Activated CD8-positive, alpha-beta T cell treated with anti-CD3 and anti-CD28 coated beads, Interleukin-2, amount 10 ng/mL, durations not matched to agents 7 days and 5 days (primary cell): ENCODE measurements at regions of chr19 and their contacts with region 1.

Region 1: DNA sequence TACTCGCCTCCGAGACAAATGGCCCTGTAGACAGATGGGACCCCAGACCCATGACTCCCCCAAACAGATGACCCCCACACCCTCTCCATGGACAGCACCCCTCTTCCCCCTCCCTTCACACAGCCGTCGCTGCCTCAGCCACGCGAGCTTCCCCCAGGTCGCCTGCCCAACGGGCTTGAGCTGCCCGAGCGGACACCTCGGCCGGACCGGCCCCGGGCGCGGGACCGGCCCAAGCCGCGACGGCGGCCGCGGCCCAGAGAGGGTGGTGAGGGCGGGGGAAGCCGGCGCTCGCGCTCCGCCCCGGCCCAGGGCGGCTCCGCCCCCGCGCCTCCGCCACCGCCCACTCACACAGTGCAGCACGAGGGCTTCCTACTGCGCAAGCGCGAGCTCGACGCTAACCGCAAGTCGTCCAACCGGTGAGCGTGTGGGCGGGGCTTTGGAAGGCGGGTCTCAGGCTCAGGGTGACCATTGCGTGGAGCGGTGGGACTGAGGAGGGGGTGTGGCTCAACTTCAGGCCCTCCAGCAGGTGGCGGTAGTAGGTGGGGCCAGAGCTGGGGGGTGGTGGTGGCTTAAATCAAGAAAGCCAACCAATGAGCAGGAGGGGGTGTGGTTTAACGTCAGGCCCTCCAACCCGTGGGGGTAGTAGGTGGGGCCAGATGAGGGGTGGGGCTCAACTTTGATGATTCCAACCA is 6.2 kb upstream of the SHKBP1 start:
- DNase-seq: peak; percentile 99
- ATAC-seq: peak; percentile 96
- H3K4me3 Mint-ChIP-seq: peak overlapping the region; percentile 62
- H3K27ac Mint-ChIP-seq: peak overlapping the region; percentile 73
- H3K4me1 Mint-ChIP-seq: peaks cover 19% of the 10 kb centered on the region
- H3K27me3 Mint-ChIP-seq: peaks cover 32% of the 10 kb centered on the region

Region 2: GRCh38 chr19:40489882-40490230 is 80.6 kb before region 1 on chr19:
- CTCF ChIA-PET with region 1: no interaction called
- POLR2A ChIA-PET with region 1: no interaction called
- DNase-seq: no peak
- ATAC-seq: no peak
- H3K4me3 Mint-ChIP-seq: no peak overlapping the region
- H3K27ac Mint-ChIP-seq: no peak overlapping the region
- H3K4me1 Mint-ChIP-seq: peaks cover 6% of the 10 kb centered on the region
- H3K27me3 Mint-ChIP-seq: peaks cover 23% of the 10 kb centered on the region

Region 3: DNA sequence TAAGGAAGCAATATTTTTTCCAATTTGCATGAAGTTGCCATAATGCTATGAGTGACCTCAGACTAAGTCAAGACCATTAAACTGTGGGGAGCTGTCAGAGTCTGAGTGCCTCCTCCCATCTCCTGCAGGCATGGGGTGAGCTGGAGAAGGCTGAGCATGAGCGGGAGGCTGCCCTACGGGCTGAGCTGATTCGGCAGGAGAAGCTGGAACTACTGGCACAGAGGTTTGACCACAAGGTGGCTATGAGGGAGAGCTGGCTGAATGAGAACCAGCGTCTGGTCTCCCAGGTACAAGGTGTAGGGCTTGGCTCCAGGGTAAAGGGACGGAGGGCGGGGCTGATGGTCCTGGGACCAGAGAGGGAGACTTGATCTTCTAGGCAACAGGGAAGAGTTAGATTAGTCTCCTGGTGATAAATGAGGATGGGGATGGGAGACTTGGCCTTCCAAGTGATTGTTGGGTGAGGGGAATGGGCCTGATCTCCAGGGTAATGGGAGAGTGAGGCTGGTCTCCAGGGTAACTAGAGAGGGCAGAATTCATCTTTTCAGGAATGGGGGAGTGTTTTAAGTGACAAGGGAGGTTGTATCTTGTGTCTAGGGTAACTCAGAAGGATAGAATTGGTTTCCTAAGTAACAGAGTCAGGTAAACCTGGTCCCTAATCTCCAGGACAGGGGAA is 67.7 kb before region 1 on chr19:
- CTCF ChIA-PET with region 1: no interaction called
- POLR2A ChIA-PET with region 1: no interaction called
- DNase-seq: no peak
- ATAC-seq: no peak
- H3K4me3 Mint-ChIP-seq: no peak overlapping the region
- H3K27ac Mint-ChIP-seq: no peak overlapping the region
- H3K4me1 Mint-ChIP-seq: no peaks in the 10 kb centered on the region
- H3K27me3 Mint-ChIP-seq: peaks cover 2% of the 10 kb centered on the region

Region 4: GRCh38 chr19:40549007-40549708 is 21.3 kb before region 1 on chr19:
- CTCF ChIA-PET with region 1: interaction called, 13 read pairs
- POLR2A ChIA-PET with region 1: interaction called, 3 read pairs
- DNase-seq: peak; percentile 77
- ATAC-seq: peak; percentile 92
- H3K4me3 Mint-ChIP-seq: no peak overlapping the region
- H3K27ac Mint-ChIP-seq: no peak overlapping the region
- H3K4me1 Mint-ChIP-seq: peaks cover 5% of the 10 kb centered on the region
- H3K27me3 Mint-ChIP-seq: peaks cover 47% of the 10 kb centered on the region

Region 5: GRCh38 chr19:40603389-40604135 is 33.1 kb after region 1 on chr19:
- CTCF ChIA-PET with region 1: interaction called, 36 read pairs
- POLR2A ChIA-PET with region 1: interaction called, 7 read pairs
- DNase-seq: peak; percentile 99
- ATAC-seq: peak; percentile 79
- H3K4me3 Mint-ChIP-seq: peak overlapping the region; percentile 80
- H3K27ac Mint-ChIP-seq: peak overlapping the region; percentile 92
- H3K4me1 Mint-ChIP-seq: peaks cover 78% of the 10 kb centered on the region
- H3K27me3 Mint-ChIP-seq: peaks cover 33% of the 10 kb centered on the region

Region 6: DNA sequence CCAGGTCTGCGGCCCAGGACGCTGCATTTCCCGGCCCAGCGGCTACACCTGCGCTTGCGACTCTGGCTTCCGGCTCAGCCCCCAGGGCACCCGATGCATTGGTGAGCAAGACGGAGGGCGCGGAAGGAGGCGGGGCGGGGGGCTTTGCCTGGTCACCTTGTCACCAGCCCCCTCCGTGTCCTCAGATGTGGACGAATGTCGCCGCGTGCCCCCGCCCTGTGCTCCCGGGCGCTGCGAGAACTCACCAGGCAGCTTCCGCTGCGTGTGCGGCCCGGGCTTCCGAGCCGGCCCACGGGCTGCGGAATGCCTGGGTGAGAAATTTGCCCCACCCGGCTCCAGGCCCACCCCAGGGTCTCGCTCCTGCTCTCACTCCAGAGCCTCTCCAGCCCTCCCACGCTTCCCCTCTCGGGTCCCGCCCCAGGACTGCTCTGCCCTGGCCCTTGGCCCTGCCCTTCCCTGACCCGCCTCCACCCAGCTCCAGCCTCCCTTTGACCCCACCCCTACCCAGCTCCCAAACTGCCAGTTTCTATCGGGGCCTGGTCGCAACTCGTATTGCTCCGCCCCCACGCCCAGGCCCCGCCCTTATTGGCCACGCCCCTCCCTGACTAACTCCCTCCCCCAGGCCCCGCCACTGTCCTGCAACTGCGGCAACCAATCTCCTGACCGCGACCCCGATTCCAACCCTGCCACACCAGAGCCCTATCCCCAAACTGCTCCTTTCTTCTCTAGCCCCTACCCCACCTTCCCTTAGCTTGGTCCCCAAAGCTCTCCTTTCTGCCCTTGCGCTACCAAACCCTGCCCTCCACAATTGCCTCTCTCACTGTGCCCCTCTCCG is 39.3 kb after region 1 on chr19:
- CTCF ChIA-PET with region 1: interaction called, 12 read pairs
- POLR2A ChIA-PET with region 1: interaction called, 7 read pairs
- DNase-seq: peak; percentile 91
- ATAC-seq: peak; percentile 54
- H3K4me3 Mint-ChIP-seq: peak overlapping the region; percentile 76
- H3K27ac Mint-ChIP-seq: peak overlapping the region; percentile 91
- H3K4me1 Mint-ChIP-seq: peaks cover 78% of the 10 kb centered on the region
- H3K27me3 Mint-ChIP-seq: no peaks in the 10 kb centered on the region